Activated CD8-positive, alpha-beta T cell treated with anti-CD3 and anti-CD28 coated beads, Interleukin-2, amount 10 ng/mL, durations not matched to agents 7 days and 5 days (primary cell): ENCODE measurements at regions of chr9 and their contacts with region 1.

Region 1: GRCh38 chr9:92764988-92765936 is 629 bp upstream of the BICD2 start:
- DNase-seq: peak; percentile 98
- ATAC-seq: peak; percentile 91
- H3K4me3 Mint-ChIP-seq: peak overlapping the region; percentile 94
- H3K27ac Mint-ChIP-seq: peak overlapping the region; percentile 95
- H3K4me1 Mint-ChIP-seq: peaks cover 47% of the 10 kb centered on the region
- H3K27me3 Mint-ChIP-seq: no peaks in the 10 kb centered on the region

Region 2: GRCh38 chr9:92716557-92716956 is 48.7 kb before region 1 on chr9:
- CTCF ChIA-PET with region 1: interaction called, 10 read pairs
- POLR2A ChIA-PET with region 1: no interaction called
- DNase-seq: peak; percentile 88
- ATAC-seq: peak; percentile 76
- H3K4me3 Mint-ChIP-seq: no peak overlapping the region
- H3K27ac Mint-ChIP-seq: no peak overlapping the region
- H3K4me1 Mint-ChIP-seq: peaks cover 22% of the 10 kb centered on the region
- H3K27me3 Mint-ChIP-seq: no peaks in the 10 kb centered on the region

Region 3: GRCh38 chr9:92747459-92748232 is 17.6 kb before region 1 on chr9:
- CTCF ChIA-PET with region 1: no interaction called
- POLR2A ChIA-PET with region 1: no interaction called
- DNase-seq: no peak
- ATAC-seq: no peak
- H3K4me3 Mint-ChIP-seq: no peak overlapping the region
- H3K27ac Mint-ChIP-seq: no peak overlapping the region
- H3K4me1 Mint-ChIP-seq: peaks cover 22% of the 10 kb centered on the region
- H3K27me3 Mint-ChIP-seq: no peaks in the 10 kb centered on the region